ENCODE measurements at regions of chr3 and their contacts with region 1.

Region 1: GRCh38 chr3:156368189-156368588 is 186.7 kb downstream of the SSR3 start:
- DNase-seq: no peak
- H3K4me3 Mint-ChIP-seq: no peak overlapping the region
- H3K27ac Mint-ChIP-seq: no peak overlapping the region
- H3K4me1 Mint-ChIP-seq: no peaks in the 10 kb centered on the region
- H3K27me3 Mint-ChIP-seq: peaks cover 22% of the 10 kb centered on the region

Region 2: DNA sequence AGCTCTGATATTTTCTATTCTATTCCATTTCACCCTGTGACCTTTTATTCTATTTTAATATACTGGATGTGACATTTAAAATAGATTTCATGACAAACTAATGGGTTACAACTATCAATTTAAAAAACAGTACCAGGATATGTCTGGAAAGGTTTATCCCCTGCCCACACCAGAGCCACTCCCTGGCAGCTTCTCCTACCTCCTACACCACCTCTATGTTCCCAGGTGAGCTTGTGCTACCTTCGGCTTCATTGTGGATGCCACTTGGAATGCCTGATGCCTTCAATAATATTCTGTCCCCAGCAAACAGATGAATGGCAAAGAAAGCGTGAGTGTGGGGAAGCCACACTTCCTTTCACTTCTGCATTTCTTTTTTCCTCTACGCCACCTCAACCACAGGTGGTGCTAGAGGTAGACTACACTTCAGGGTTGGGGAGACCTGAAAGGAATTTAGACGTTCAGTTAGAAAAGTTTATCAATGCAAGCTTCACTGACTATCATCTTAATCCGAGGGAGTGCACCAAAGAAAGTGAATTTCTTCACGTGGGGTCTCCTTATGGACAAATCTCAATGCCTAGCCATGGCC is 26.3 kb before region 1 on chr3:
- intact Hi-C with region 1: loop called (anchors 1 kb)
- DNase-seq: no peak
- H3K4me3 Mint-ChIP-seq: no peak overlapping the region
- H3K27ac Mint-ChIP-seq: no peak overlapping the region
- H3K4me1 Mint-ChIP-seq: no peaks in the 10 kb centered on the region
- H3K27me3 Mint-ChIP-seq: peaks cover 12% of the 10 kb centered on the region

Region 3: DNA sequence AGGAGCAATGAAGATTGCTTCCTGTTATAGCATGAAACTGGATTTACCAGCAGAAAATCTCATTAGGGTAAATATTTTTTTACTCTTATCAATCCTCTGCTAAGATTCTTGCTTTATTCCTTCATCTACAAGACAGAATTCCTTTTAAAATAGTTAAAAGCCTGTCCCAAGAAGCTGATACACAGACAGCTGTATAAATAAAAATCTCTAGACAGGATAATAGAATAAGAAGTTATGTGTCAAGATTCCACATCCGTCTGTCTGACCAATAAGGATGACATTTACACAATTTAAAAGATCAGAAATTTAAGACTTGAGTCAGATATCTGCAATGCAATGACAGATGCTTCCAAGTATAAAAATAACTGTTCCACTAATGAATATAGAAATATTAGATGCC is 129.1 kb after region 1 on chr3:
- intact Hi-C with region 1: no loop called
- DNase-seq: no peak
- H3K4me3 Mint-ChIP-seq: no peak overlapping the region
- H3K27ac Mint-ChIP-seq: no peak overlapping the region
- H3K4me1 Mint-ChIP-seq: no peaks in the 10 kb centered on the region
- H3K27me3 Mint-ChIP-seq: peaks cover 22% of the 10 kb centered on the region

Region 4: GRCh38 chr3:156633335-156633734 is 265.1 kb after region 1 on chr3:
- intact Hi-C with region 1: no loop called
- DNase-seq: no peak
- H3K4me3 Mint-ChIP-seq: no peak overlapping the region
- H3K27ac Mint-ChIP-seq: no peak overlapping the region
- H3K4me1 Mint-ChIP-seq: no peaks in the 10 kb centered on the region
- H3K27me3 Mint-ChIP-seq: peaks cover 5% of the 10 kb centered on the region

Measured in activated T-helper 1 cell treated with anti-CD3 and anti-CD28 coated beads, Interleukin-12 subunit alpha, Interleukin-12 subunit beta, Interleukin-2, Interleukin-4 antibody, amounts not matched to agents 30 ng/mL and 10 ng/mL and 1 ng/mL, durations not matched to agents 14 hours and 24 hours and 36 hours (primary cell).